ENCODE measurements at regions of chr5 and their contacts with region 1.

Region 1: DNA sequence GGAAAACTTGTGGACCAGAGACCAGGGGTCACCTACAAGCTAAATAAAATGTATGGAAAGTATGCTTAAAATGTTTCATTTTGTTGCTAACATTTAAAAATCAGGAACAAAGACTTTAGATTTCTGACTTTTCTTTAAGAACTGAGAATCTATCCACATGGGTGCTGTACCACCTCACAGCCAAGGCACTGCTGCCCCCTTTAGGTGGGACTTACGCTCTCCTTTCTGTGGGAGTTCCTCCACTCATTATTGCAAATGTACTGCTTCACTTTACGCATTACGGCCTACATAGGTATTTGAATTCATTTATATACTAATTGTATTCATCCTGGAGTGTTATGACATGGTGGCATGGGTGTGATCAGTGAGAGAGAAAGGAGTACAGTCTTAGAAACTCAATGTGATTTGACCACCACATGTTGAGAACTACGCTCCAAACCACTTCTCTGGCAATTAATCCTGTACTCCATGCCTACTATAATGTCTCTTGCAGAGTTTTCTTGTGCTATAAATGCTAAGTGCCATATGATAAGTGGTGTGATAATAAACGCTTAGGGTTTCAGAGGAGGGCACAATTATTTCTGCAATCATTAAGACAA is 24.7 kb upstream of the CETN3 start:
- DNase-seq: peak; percentile 17 to 61 (median 38)
- ATAC-seq: peak; percentile 52
- H3K4me3 ChIP-seq: no peak overlapping the region
- H3K4me3 Mint-ChIP-seq: no peak overlapping the region
- H3K27ac ChIP-seq: no peak overlapping the region
- H3K27ac Mint-ChIP-seq: no peak overlapping the region
- H3K4me1 ChIP-seq: no peaks in the 10 kb centered on the region
- H3K4me1 Mint-ChIP-seq: no peaks in the 10 kb centered on the region
- H3K27me3 ChIP-seq: no peaks in the 10 kb centered on the region
- H3K27me3 Mint-ChIP-seq: peaks cover 4% of the 10 kb centered on the region
- CTCF ChIP-seq: peak; percentile 62

Region 2: GRCh38 chr5:88729084-88729828 is 1705.0 kb before region 1 on chr5:
- CTCF ChIA-PET with region 1: interaction called, 4 read pairs
- POLR2A ChIA-PET with region 1: no interaction called
- intact Hi-C with region 1: loop called (anchors 1 to 5 kb)
- DNase-seq: peak in 13 of 14 experiments; percentile 7 to 79 (median 25)
- ATAC-seq: peak; percentile 83
- H3K4me3 ChIP-seq: no peak overlapping the region
- H3K4me3 Mint-ChIP-seq: no peak overlapping the region
- H3K27ac ChIP-seq: no peak overlapping the region
- H3K27ac Mint-ChIP-seq: no peak overlapping the region
- H3K4me1 ChIP-seq: no peaks in the 10 kb centered on the region
- H3K4me1 Mint-ChIP-seq: peaks cover 4% of the 10 kb centered on the region
- H3K27me3 ChIP-seq: peaks cover 1 to 7% of the 10 kb centered on the region in 2 experiments
- H3K27me3 Mint-ChIP-seq: peaks cover 26% of the 10 kb centered on the region
- CTCF ChIP-seq: peak; percentile 79

Region 3: GRCh38 chr5:90606539-90606938 is 172.3 kb after region 1 on chr5:
- CTCF ChIA-PET with region 1: no interaction called
- POLR2A ChIA-PET with region 1: no interaction called
- intact Hi-C with region 1: loop called in 1 of 2 experiments (anchors 10 kb)
- DNase-seq: no peak
- ATAC-seq: no peak
- H3K4me3 ChIP-seq: no peak overlapping the region
- H3K4me3 Mint-ChIP-seq: no peak overlapping the region
- H3K27ac ChIP-seq: no peak overlapping the region
- H3K27ac Mint-ChIP-seq: no peak overlapping the region
- H3K4me1 ChIP-seq: no peaks in the 10 kb centered on the region
- H3K4me1 Mint-ChIP-seq: no peaks in the 10 kb centered on the region
- H3K27me3 ChIP-seq: no peaks in the 10 kb centered on the region
- H3K27me3 Mint-ChIP-seq: peaks cover 41% of the 10 kb centered on the region
- CTCF ChIP-seq: no peak

Region 4: GRCh38 chr5:90783460-90784333 is 349.5 kb after region 1 on chr5:
- CTCF ChIA-PET with region 1: interaction called, 17 read pairs
- POLR2A ChIA-PET with region 1: no interaction called
- intact Hi-C with region 1: no loop called
- DNase-seq: peak; percentile 40 to 77 (median 60)
- ATAC-seq: peak; percentile 57
- H3K4me3 ChIP-seq: no peak overlapping the region
- H3K4me3 Mint-ChIP-seq: no peak overlapping the region
- H3K27ac ChIP-seq: no peak overlapping the region
- H3K27ac Mint-ChIP-seq: no peak overlapping the region
- H3K4me1 ChIP-seq: no peaks in the 10 kb centered on the region
- H3K4me1 Mint-ChIP-seq: no peaks in the 10 kb centered on the region
- H3K27me3 ChIP-seq: no peaks in the 10 kb centered on the region
- H3K27me3 Mint-ChIP-seq: peaks cover 14% of the 10 kb centered on the region
- CTCF ChIP-seq: peak; percentile 94

Region 5: GRCh38 chr5:90834711-90835110 is 400.5 kb after region 1 on chr5:
- CTCF ChIA-PET with region 1: no interaction called
- POLR2A ChIA-PET with region 1: no interaction called
- intact Hi-C with region 1: no loop called
- DNase-seq: no peak
- ATAC-seq: no peak
- H3K4me3 ChIP-seq: no peak overlapping the region
- H3K4me3 Mint-ChIP-seq: no peak overlapping the region
- H3K27ac ChIP-seq: no peak overlapping the region
- H3K27ac Mint-ChIP-seq: no peak overlapping the region
- H3K4me1 ChIP-seq: no peaks in the 10 kb centered on the region
- H3K4me1 Mint-ChIP-seq: no peaks in the 10 kb centered on the region
- H3K27me3 ChIP-seq: no peaks in the 10 kb centered on the region
- H3K27me3 Mint-ChIP-seq: peaks cover 17% of the 10 kb centered on the region
- CTCF ChIP-seq: no peak

Measured in CD4-positive, alpha-beta T cell (primary cell).